CD4-positive, alpha-beta memory T cell (primary cell): ENCODE measurements at regions of chr5 and their contacts with region 1.

Region 1: GRCh38 chr5:54310433-54311175 is at the start of gene ARL15:
- DNase-seq: peak; percentile 98
- H3K4me3 ChIP-seq: peak within 1 kb of the TSS; percentile 84 to 96
- H3K4me3 Mint-ChIP-seq: peak within 1 kb of the TSS; percentile 91 to 99 (median 97)
- H3K27ac ChIP-seq: peak within 1 kb of the TSS; percentile 86
- H3K27ac Mint-ChIP-seq: peak within 1 kb of the TSS; percentile 94 to 98 (median 96)
- H3K4me1 ChIP-seq: peaks cover 16% of the 10 kb centered on the region
- H3K4me1 Mint-ChIP-seq: peaks cover 12 to 35% (median 26%) of the 10 kb centered on the region in 4 donors
- H3K27me3 ChIP-seq: no peaks in the 10 kb centered on the region
- H3K27me3 Mint-ChIP-seq: peaks cover 7 to 8% of the 10 kb centered on the region in 2 donors
- total RNA-seq, gene ARL15: 14.1 to 15.3 TPM

Region 2: GRCh38 chr5:52374286-52374685 is 1936.3 kb before region 1 on chr5:
- CTCF ChIA-PET with region 1: no interaction called
- POLR2A ChIA-PET with region 1: no interaction called
- intact Hi-C with region 1: no loop called
- DNase-seq: no peak
- H3K4me3 ChIP-seq: no peak overlapping the region
- H3K4me3 Mint-ChIP-seq: no peak overlapping the region
- H3K27ac ChIP-seq: no peak overlapping the region
- H3K27ac Mint-ChIP-seq: no peak overlapping the region
- H3K4me1 ChIP-seq: no peaks in the 10 kb centered on the region
- H3K4me1 Mint-ChIP-seq: no peaks in the 10 kb centered on the region
- H3K27me3 ChIP-seq: no peaks in the 10 kb centered on the region
- H3K27me3 Mint-ChIP-seq: no peaks in the 10 kb centered on the region

Region 3: GRCh38 chr5:53481887-53482716 is 828.5 kb before region 1 on chr5:
- CTCF ChIA-PET with region 1: no interaction called
- POLR2A ChIA-PET with region 1: no interaction called
- intact Hi-C with region 1: loop called (anchors 5 kb)
- DNase-seq: peak; percentile 53 to 66 (median 59)
- H3K4me3 ChIP-seq: peak overlapping the region; percentile 37 to 57
- H3K4me3 Mint-ChIP-seq: peak overlapping the region; percentile 82 to 97 (median 91)
- H3K27ac ChIP-seq: no peak overlapping the region
- H3K27ac Mint-ChIP-seq: peak overlapping the region; percentile 43 to 84 (median 59)
- H3K4me1 ChIP-seq: peaks cover 34% of the 10 kb centered on the region
- H3K4me1 Mint-ChIP-seq: peaks cover 17 to 50% (median 31%) of the 10 kb centered on the region in 4 donors
- H3K27me3 ChIP-seq: peaks cover 25% of the 10 kb centered on the region
- H3K27me3 Mint-ChIP-seq: peaks cover 29 to 41% of the 10 kb centered on the region in 2 donors

Region 4: GRCh38 chr5:54415896-54416601 is 105.4 kb after region 1 on chr5:
- CTCF ChIA-PET with region 1: interaction called, 11 read pairs
- POLR2A ChIA-PET with region 1: interaction called, 5 read pairs
- intact Hi-C with region 1: loop called (anchors 1 kb)
- DNase-seq: no peak
- H3K4me3 ChIP-seq: no peak overlapping the region
- H3K4me3 Mint-ChIP-seq: no peak overlapping the region
- H3K27ac ChIP-seq: no peak overlapping the region
- H3K27ac Mint-ChIP-seq: no peak overlapping the region
- H3K4me1 ChIP-seq: no peaks in the 10 kb centered on the region
- H3K4me1 Mint-ChIP-seq: no peaks in the 10 kb centered on the region
- H3K27me3 ChIP-seq: no peaks in the 10 kb centered on the region
- H3K27me3 Mint-ChIP-seq: peaks cover 7 to 9% of the 10 kb centered on the region in 2 donors

Region 5: DNA sequence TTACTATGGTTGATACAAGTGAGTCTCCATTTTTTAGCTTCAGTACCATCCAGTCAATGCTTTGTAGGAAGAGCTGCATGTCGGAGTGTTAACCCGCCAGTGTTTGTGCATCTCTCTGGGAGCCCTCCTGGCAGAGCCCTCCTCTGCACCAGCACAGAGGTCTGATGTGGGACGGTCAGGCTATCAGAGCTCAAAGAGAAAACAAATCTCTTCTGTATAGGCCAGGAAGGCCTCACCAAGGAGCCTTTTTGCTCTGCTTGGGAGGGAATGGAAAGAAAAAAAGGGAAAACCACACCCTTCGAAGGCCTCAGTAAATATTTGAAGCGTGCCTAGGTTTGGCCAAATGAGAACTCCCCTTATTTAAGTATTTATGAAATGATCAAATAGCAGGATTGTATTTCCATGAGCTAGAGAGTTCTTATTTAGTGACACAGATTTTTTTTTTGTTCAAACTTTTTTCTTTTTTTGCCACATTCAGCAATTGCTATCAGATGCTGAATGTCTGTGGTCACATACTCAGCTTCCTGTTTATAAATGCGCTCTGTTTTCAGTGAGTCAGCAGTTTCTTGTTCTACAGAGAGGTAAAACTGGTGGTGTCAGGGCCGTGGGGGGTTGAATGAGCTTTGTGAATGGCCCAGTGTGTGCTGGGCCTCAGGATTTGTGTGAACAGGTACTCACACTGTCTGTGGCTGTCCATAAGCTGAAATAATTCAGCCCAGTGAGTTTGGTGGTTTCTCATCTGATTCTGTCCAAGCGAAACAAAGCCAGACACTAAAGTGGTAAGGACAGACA is 433.6 kb after region 1 on chr5:
- CTCF ChIA-PET with region 1: no interaction called
- POLR2A ChIA-PET with region 1: no interaction called
- intact Hi-C with region 1: loop called (anchors 2 kb)
- DNase-seq: peak; percentile 69 to 78 (median 75)
- H3K4me3 ChIP-seq: no peak overlapping the region
- H3K4me3 Mint-ChIP-seq: peak overlapping the region; percentile 24 to 84 (median 60)
- H3K27ac ChIP-seq: peak overlapping the region; percentile 20
- H3K27ac Mint-ChIP-seq: peak overlapping the region; percentile 82 to 93 (median 84)
- H3K4me1 ChIP-seq: peaks cover 49% of the 10 kb centered on the region
- H3K4me1 Mint-ChIP-seq: peaks cover 25 to 42% (median 33%) of the 10 kb centered on the region in 4 donors
- H3K27me3 ChIP-seq: no peaks in the 10 kb centered on the region
- H3K27me3 Mint-ChIP-seq: no peaks in the 10 kb centered on the region

Region 6: DNA sequence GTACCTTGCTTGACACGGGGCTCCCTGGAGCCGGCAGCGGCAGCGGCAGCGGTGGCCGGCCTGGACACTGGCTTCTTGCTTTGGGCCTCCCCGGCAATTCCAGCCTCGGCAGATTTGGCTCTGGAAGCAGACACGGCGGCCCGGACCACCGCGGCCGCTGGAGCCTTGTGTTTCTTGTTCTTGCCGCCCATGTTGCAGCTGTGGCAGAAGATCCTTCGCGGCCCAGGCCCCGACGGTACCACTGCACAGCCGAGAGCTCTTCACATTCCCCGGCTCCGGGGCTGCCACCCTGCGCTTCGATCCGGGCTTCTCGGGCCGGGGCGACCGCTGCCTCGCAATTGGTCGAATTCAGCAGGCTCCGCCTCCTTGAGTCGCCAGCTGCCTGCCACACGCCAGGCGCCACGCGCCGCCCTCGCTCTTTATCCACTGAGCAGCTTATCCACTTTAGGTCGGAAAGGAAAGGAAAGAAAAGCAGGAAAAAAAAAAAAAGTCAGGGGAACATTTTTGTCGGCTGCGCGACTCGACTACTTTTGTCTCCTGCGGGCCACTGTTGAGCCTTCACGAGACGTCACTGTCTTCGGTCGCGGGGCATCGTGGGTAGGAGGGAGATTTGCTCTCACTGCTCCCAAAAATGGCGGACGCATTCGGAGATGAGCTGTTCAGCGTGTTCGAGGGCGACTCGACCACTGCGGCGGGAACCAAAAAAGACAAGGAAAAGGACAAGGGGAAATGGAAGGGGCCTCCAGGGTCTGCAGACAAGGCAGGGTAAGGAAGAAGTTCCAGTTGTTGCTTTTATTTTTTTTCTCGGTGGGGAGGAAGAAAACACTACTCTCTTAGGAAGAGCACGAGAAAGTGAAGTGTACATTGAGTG is 997.0 kb after region 1 on chr5 and contains the starts of genes DHX29 and MTREX:
- CTCF ChIA-PET with region 1: no interaction called
- POLR2A ChIA-PET with region 1: no interaction called
- intact Hi-C with region 1: loop called (anchors 5 kb)
- DNase-seq: peak; percentile 89 to 93 (median 91)
- H3K4me3 ChIP-seq: peak within 1 kb of the TSS; percentile 86 to 94
- H3K4me3 Mint-ChIP-seq: no peak within 1 kb of the TSS
- H3K27ac ChIP-seq: peak within 1 kb of the TSS; percentile 94
- H3K27ac Mint-ChIP-seq: no peak within 1 kb of the TSS
- H3K4me1 ChIP-seq: peaks cover 66% of the 10 kb centered on the region
- H3K4me1 Mint-ChIP-seq: peaks cover 21 to 35% (median 25%) of the 10 kb centered on the region in 4 donors
- H3K27me3 ChIP-seq: no peaks in the 10 kb centered on the region
- H3K27me3 Mint-ChIP-seq: no peaks in the 10 kb centered on the region
- total RNA-seq, gene DHX29: 18.5 to 22.5 TPM
- total RNA-seq, gene MTREX: 73.3 to 82.2 TPM